PC-9 (cell line): ENCODE measurements at regions of chr9 and their contacts with region 1.

Region 1: GRCh38 chr9:123349691-123350480 is 6.1 kb upstream of the CRB2 start:
- DNase-seq: peak in 1 of 2 experiments; percentile 62
- H3K4me3 ChIP-seq: no peak overlapping the region
- H3K27ac ChIP-seq: no peak overlapping the region
- H3K4me1 ChIP-seq: no peaks in the 10 kb centered on the region
- H3K27me3 ChIP-seq: peaks cover 25% of the 10 kb centered on the region; the same call in 1 of the 2 replicates
- CTCF ChIP-seq: peak; percentile 96

Region 2: GRCh38 chr9:122464633-122465567 is 885.0 kb before region 1 on chr9:
- CTCF ChIA-PET with region 1: no interaction called
- POLR2A ChIA-PET with region 1: no interaction called
- intact Hi-C with region 1: loop called (anchors 10 kb)
- DNase-seq: peak; percentile 50 to 74
- H3K4me3 ChIP-seq: peak overlapping the region; percentile 51; the same call in 1 of the 2 replicates
- H3K27ac ChIP-seq: no peak overlapping the region
- H3K4me1 ChIP-seq: no peaks in the 10 kb centered on the region
- H3K27me3 ChIP-seq: peaks cover 21% of the 10 kb centered on the region; the same call in 1 of the 2 replicates
- CTCF ChIP-seq: peak; percentile 89

Region 3: DNA sequence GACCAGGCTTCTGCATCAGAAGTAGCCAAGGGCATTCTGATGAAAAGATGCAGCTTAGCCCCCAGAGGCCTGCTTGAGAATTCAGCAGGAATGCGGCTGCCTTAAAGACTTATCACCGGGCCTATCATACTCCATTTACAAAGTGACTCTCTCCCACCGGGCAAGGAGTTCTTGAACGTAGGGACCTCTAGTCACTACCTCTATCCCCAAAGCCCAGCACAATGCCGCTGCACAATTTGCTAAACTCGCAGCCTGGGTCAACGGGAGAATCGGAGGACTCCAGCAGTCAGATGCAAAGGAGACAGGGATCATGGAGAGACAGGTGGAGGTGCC is 522.2 kb before region 1 on chr9:
- CTCF ChIA-PET with region 1: no interaction called
- POLR2A ChIA-PET with region 1: no interaction called
- intact Hi-C with region 1: loop called (anchors 10 kb)
- DNase-seq: no peak
- H3K4me3 ChIP-seq: peak overlapping the region; percentile 61
- H3K27ac ChIP-seq: peak overlapping the region; percentile 64
- H3K4me1 ChIP-seq: peaks cover 14% of the 10 kb centered on the region
- H3K27me3 ChIP-seq: no peaks in the 10 kb centered on the region
- CTCF ChIP-seq: no peak

Region 4: GRCh38 chr9:123081824-123082223 is 268.1 kb before region 1 on chr9:
- CTCF ChIA-PET with region 1: interaction called, 5 read pairs
- POLR2A ChIA-PET with region 1: no interaction called
- intact Hi-C with region 1: loop called (anchors 1 kb)
- DNase-seq: no peak
- H3K4me3 ChIP-seq: no peak overlapping the region
- H3K27ac ChIP-seq: no peak overlapping the region
- H3K4me1 ChIP-seq: no peaks in the 10 kb centered on the region
- H3K27me3 ChIP-seq: no peaks in the 10 kb centered on the region
- CTCF ChIP-seq: peak; percentile 74

Region 5: DNA sequence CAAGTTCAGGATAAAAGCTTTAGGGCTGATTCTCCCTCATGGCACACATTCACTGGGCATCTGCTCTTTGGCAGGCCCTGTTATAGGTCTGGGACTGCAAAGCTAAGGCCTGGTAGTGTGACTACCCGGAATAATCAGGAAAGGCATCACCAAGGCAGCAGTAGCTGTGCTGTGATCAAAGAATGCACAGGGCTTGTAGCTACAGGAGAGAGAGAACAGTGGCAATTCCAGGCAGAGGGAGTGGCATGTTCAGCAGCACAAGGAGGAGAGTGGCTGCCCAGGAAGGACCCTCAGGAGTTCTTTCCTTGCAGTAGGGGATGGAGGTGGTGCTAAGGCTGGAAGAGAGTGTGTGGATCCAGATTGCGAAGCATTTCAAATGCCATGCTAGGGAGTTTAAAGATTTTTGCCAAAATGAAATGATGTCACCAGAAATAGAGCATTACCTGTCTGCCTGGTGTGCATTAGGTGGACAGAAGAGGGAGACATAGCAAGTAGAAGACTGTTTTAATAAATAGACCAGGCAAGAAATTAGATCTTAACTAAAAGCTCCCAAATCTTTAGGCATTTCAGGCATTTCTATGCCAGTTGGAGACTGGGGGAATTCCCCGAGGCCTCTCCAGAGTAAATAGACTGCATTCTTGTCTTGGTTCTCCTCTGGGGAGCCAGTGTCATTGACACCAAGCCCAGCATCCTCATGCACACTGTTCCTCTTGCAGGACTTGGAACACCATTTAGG is 247.3 kb before region 1 on chr9:
- CTCF ChIA-PET with region 1: interaction called, 4 read pairs
- POLR2A ChIA-PET with region 1: no interaction called
- intact Hi-C with region 1: loop called (anchors 5 kb)
- DNase-seq: peak in 1 of 2 experiments; percentile 34
- H3K4me3 ChIP-seq: no peak overlapping the region
- H3K27ac ChIP-seq: no peak overlapping the region
- H3K4me1 ChIP-seq: no peaks in the 10 kb centered on the region
- H3K27me3 ChIP-seq: no peaks in the 10 kb centered on the region
- CTCF ChIP-seq: peak; percentile 55

Region 6: DNA sequence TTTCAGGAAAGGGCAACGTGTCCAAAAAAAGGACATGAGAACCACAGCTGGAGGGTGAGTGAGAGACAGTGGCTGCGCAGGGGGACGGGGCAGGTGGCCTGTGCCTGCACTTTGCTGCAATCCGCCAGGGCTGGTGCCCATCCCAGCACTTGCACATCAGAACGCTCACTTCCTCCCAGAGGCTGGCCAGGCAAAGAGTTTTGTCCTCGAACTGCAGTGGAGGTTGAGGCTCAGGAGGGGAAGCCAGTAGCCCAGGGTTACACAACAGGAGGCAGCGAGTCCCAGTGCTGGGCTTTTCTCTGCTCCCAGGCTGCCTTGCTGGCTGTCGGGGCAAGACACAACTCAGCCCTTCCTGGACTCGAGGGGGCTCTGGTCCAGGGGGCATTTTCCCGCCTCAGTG is 39.2 kb after region 1 on chr9:
- CTCF ChIA-PET with region 1: interaction called, 3 read pairs
- POLR2A ChIA-PET with region 1: no interaction called
- intact Hi-C with region 1: loop called (anchors 1 kb)
- DNase-seq: no peak
- H3K4me3 ChIP-seq: no peak overlapping the region
- H3K27ac ChIP-seq: no peak overlapping the region
- H3K4me1 ChIP-seq: no peaks in the 10 kb centered on the region
- H3K27me3 ChIP-seq: no peaks in the 10 kb centered on the region
- CTCF ChIP-seq: no peak

Region 7: GRCh38 chr9:123434619-123435528 is 85.0 kb after region 1 on chr9:
- CTCF ChIA-PET with region 1: no interaction called
- POLR2A ChIA-PET with region 1: no interaction called
- intact Hi-C with region 1: no loop called
- DNase-seq: no peak
- H3K4me3 ChIP-seq: no peak overlapping the region
- H3K27ac ChIP-seq: no peak overlapping the region
- H3K4me1 ChIP-seq: no peaks in the 10 kb centered on the region
- H3K27me3 ChIP-seq: no peaks in the 10 kb centered on the region
- CTCF ChIP-seq: no peak

Region 8: DNA sequence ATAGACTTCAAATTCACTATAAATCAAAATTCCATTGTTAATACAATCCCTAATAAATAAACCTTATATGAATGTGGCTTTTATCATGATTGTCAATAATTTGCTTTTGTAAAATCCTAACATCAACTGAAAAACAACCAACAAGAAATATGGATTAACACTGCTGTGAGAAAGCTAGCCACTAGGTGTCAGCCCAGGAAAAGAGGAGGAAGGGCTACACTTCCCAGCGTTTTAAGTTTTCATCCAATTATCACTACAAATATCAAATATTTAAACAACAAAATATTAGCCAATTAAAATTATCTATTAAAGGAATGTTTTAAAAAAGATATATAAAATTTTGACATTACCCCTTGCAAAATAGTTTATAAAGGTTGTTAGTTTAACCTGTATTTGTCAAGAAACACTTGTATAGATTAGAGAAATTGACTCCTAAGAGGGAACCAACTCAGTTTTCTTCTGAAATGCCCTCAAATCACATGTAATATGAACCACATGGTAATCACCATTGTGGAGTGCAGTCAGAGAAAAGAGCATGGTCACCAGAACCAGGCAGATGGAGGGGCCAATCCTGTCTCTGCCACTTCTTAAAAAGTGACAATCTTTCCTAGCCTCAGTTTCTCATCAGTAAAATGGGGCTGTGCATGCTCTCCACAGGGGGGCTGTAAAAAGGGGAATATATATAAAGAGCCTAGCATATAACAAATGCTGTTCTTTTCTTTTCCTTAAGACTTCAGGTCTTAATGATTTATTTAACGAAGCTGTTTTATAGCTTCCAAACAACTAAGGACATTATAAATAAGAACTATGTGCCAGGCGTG is 194.3 kb after region 1 on chr9:
- CTCF ChIA-PET with region 1: no interaction called
- POLR2A ChIA-PET with region 1: no interaction called
- intact Hi-C with region 1: no loop called
- DNase-seq: peak in 1 of 2 experiments; percentile 15
- H3K4me3 ChIP-seq: no peak overlapping the region
- H3K27ac ChIP-seq: no peak overlapping the region
- H3K4me1 ChIP-seq: no peaks in the 10 kb centered on the region
- H3K27me3 ChIP-seq: no peaks in the 10 kb centered on the region
- CTCF ChIP-seq: peak; percentile 89

Region 9: DNA sequence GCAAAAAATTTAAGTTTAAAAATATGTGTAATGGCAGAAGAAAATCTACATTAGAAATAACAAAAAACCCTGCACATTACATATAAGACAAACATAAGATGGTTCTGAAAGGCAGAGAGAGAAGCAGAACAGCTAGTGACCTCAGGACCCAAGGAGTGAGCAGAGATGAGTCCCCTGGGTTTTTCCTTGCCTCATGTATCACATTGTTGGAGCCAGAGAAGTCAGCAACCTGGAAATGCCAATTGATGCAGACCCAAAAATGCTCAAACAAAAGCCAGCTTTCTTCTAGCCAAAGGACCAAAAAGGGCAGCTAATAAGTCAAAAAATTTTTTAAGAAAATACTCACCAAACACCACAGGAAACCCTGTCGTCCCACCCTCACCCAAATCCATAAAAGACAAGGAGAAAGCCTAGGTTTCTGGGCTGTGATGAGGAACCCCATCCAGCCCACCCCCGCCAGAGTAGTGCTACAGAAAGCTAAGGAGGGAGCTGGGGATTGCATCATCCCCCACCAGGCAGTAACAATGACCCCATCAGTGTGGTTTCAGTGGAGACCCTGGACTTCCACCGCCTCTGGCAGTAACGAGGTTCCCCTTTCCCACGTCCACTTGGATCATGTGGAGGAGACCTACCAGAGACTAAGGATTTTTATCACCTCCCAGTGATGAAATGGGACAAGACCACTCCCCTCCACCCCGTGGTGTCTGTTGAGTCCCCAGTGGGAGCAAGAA is 562.4 kb after region 1 on chr9:
- CTCF ChIA-PET with region 1: no interaction called
- POLR2A ChIA-PET with region 1: no interaction called
- intact Hi-C with region 1: no loop called
- DNase-seq: no peak
- H3K4me3 ChIP-seq: no peak overlapping the region
- H3K27ac ChIP-seq: no peak overlapping the region
- H3K4me1 ChIP-seq: no peaks in the 10 kb centered on the region
- H3K27me3 ChIP-seq: no peaks in the 10 kb centered on the region
- CTCF ChIP-seq: no peak